GM10248 (cell line): ENCODE measurements at regions of chr1 and their contacts with region 1.

Region 1: GRCh38 chr1:9101510-9102146 is 27.3 kb downstream of the GPR157 start:
- DNase-seq: peak; percentile 82
- CTCF ChIP-seq: peak; percentile 79

Region 2: GRCh38 chr1:8910914-8911313 is 190.7 kb before region 1 on chr1:
- CTCF ChIA-PET with region 1: interaction called, 11 read pairs
- POLR2A ChIA-PET with region 1: no interaction called
- DNase-seq: no peak
- CTCF ChIP-seq: no peak

Region 3: DNA sequence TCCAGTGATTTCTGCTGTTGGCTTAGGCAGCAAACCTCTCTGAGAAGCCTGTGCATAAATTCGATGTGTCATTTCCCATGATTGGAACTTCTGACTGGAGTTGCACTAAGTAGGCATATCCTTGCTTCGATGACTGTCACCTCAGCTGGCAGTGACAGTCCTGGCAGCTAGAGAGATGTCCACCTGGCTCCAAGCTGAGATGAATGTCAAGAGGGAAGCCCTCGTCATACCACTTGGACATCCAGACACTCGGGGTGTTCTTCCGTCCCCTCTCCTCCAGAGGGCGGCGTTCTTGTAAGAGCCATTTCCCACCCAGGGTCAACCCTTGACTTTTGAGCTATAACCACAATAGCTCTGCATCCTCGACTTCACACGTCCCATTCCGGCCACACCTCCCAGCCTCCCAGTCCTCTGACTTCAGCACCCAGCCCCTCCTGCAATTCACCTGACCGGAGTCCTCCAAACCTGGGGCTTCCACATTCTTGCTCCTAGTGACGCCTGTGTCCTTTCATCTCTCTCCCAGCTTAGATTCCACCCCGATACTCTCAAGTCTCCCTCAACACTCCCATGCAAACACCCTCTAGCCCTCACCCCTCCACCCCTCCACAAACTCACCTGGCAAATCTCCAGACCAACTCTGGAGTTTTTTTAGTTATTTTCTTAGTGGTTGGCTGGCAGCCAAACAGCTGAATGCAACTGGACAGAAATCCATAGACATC is 138.7 kb before region 1 on chr1:
- CTCF ChIA-PET with region 1: interaction called, 16 read pairs
- POLR2A ChIA-PET with region 1: no interaction called
- DNase-seq: peak; percentile 78
- CTCF ChIP-seq: peak; percentile 45

Region 4: DNA sequence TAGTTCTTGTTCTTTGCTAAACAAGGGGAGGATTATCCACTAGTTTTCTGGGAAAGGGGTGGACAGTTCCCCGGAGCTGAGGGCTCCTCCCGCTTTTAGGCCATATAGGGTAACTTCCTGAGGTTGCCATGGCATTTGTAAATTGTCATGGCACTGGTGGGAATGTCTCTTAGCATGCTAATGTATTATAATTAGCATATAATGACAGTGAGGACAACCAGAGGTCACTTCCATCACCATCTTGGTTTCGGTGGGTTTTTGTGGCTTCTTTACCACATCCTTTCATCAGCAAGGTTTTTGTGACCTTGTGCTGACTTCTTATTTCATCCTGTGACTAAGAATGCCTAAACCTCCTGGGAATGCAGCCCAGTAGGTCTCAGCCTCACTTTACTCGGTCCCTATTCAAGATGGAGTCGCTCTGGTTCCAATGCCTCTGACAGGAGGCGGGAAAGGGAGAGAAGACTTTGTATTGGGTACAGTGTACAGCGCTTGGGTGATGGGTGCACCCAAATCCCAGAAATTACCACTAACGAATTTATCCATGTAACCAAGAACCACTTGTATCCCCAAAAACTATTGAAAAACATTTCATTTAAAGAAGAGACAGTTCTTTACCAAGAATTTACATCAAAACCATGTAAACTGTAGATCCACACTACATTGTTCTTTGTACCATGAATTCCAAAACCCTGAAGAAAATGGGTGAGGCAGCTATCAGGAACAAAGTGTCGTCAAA is 23.4 kb before region 1 on chr1:
- CTCF ChIA-PET with region 1: interaction called, 35 read pairs
- POLR2A ChIA-PET with region 1: no interaction called
- DNase-seq: no peak
- CTCF ChIP-seq: no peak

Region 5: DNA sequence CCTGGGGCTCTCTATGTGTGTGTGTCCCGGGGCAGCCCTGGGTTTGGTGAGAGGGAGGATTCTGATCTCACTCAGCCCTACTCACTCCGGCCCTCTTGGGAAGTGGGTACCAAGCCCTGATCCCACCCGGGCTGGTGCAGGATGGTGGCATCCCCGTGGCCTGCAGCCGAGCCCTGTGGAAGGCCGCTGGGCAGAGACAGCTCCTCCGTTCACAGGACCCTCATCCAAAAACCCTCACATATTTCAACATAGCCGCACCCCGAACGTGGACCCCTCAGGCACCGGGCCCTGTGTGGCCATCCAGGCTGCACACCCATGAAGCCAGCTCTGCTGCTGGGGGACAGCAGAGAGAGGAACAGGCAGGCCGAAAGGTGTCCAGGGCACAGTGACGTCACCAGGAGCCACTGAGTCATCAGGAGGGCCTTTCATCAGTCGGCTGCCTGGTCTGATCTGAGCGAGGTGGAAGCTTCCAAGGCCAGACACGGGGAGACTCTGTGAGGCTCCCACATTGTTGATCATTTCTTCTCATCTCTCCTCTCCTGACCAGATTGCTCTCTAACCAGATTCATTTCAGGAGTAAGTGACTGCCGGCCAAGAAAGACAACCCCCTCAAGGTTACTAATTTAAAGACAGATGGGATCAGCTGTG is 43.5 kb after region 1 on chr1:
- CTCF ChIA-PET with region 1: no interaction called
- POLR2A ChIA-PET with region 1: no interaction called
- DNase-seq: peak; percentile 65
- CTCF ChIP-seq: no peak

Region 6: DNA sequence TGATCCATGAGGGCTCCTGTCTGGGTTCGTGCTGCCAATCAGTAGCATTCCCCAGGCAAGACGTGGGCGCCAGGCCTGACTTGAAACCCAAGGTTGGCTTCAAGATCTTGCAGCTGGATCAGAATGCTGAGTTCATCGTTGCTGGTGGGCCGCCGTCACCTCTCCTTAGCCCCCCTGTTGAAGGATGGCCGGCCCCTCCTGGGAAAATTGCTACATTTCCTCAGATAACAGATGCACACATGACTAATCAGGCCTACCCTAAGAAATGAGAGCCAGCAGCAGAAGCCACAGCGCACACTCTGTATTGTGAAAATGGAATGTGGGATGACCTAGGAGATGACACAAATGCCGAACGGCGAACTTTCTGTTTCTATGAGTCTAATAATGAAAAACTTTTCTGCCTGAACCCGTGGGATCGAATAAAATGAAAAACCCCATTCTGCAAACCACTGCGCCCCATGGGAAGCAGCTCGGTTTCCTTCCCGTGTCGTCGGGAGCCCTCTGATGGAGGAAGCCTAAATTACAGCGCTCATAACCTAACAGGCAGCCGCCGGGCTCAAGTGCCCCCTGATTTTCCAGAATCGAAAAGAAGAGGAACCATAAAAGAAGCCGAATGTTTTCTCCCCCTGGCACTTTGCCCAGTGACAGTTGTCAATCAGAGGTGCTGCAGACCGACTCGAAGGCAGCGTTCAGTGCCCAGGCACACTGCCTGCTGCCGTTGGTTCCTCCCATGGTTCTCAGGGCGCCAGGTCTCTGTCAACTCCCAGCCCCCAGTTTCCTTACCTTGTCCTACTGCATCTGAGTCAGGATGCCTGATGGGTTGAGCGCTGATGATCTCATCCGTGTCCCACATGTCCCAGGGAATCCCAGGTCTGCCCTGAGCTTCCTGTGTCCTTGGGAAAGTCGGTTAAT is 94.8 kb after region 1 on chr1:
- CTCF ChIA-PET with region 1: interaction called, 18 read pairs
- POLR2A ChIA-PET with region 1: no interaction called
- DNase-seq: peak; percentile 74
- CTCF ChIP-seq: peak; percentile 82